SK-N-SH (cell line): ENCODE measurements at regions of chr9 and their contacts with region 1.

Region 1: DNA sequence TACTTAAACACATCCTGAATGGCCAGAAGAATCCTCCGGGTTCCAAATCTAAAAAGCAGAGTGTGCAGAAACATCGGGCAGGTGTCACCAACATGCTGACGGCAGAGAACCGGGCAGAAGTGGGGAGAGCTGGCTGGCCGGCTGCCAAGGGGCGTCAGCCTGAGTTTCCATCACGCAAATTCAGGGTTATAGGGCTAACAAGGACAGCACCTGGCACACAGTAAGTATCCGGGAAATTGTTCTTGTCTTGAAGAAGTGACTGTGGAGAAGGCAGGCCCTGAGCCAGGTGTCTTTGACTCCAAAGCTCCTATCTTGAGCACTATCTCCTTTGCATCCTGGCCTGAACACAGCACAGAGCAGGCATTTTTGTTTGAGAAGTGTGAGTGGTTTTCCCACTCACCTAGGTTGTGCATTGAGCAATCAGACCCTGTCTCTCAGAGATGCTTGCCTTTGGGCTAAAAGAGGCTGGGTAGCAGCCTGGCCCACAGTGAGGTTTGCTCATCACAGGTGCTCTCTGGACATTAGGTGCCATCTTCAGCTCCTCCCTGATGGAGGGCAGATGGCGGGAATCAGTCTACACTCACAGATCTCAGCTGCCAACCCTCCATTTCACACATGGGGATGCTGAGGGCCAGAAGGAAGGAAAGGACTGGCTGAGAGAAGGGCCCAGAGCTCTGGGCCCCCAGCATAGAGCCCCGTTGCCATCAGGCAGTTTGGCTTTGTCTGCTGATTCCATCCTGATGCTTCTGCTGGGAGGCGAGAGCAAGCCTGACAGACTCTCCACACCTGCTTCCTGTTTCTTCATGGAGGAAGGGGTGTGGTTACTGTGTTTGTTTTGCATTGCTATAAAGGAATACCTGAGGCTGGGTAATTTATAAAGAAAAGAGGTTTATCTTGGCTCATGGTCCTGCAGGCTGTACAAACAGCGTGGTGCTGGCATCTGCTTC is 52.8 kb downstream of the WHRN start:
- DNase-seq: no peak
- H3K4me3 ChIP-seq: no peak overlapping the region
- H3K27ac ChIP-seq: no peak overlapping the region
- H3K4me1 ChIP-seq: no peaks in the 10 kb centered on the region
- H3K27me3 ChIP-seq: no peaks in the 10 kb centered on the region; the same call in 1 of the 2 replicates
- CTCF ChIP-seq: no peak
- EP300 ChIP-seq: no peak
- RAD21 ChIP-seq: no peak

Region 2: GRCh38 chr9:114434878-114435311 is 17.6 kb before region 1 on chr9:
- CTCF ChIA-PET with region 1: interaction called, 10 read pairs
- POLR2A ChIA-PET with region 1: no interaction called
- DNase-seq: peak; percentile 64
- H3K4me3 ChIP-seq: no peak overlapping the region
- H3K27ac ChIP-seq: no peak overlapping the region
- H3K4me1 ChIP-seq: no peaks in the 10 kb centered on the region
- H3K27me3 ChIP-seq: no peaks in the 10 kb centered on the region; the same call in 1 of the 2 replicates
- CTCF ChIP-seq: peak; percentile 71
- EP300 ChIP-seq: no peak
- RAD21 ChIP-seq: peak; percentile 85

Region 3: GRCh38 chr9:114532561-114533237 is 80.2 kb after region 1 on chr9:
- CTCF ChIA-PET with region 1: no interaction called
- POLR2A ChIA-PET with region 1: no interaction called
- DNase-seq: no peak
- H3K4me3 ChIP-seq: no peak overlapping the region
- H3K27ac ChIP-seq: no peak overlapping the region
- H3K4me1 ChIP-seq: no peaks in the 10 kb centered on the region
- H3K27me3 ChIP-seq: peaks cover 21% of the 10 kb centered on the region; the same call in 1 of the 2 replicates
- CTCF ChIP-seq: no peak
- EP300 ChIP-seq: no peak
- RAD21 ChIP-seq: no peak